Naive thymus-derived CD4-positive, alpha-beta T cell (primary cell): ENCODE measurements at regions of chr1 and their contacts with region 1.

Region 1: DNA sequence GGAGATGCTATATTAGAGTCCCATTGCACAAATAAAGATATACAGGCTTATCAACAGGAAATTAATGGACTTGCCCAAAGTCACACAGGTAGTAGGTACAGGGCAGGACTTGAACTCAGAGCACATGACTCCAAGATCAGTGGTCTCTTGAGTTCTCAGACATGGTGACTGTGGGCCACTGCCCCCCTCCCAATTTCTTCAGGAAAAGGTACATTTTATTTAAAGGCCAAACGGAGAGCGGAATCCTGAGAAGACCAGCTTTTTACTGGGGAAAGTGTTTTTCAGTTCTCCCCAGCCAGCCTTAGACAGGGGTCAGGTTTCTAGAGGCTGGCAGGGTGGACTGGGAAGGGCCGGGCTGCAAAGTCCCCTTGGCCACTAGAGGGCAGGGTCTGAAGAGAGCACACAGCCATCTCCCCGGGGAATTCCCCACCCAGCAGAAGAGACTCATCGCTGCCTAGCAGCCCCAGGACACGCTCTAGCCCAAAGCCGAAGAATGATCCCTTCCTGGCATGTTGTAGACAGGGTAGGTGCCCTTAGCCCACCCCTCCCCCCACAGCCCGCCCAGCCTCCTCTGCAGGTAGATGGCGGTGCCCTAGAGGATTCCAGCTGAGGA is 29.7 kb downstream of the ACP6 start:
- DNase-seq: peak; percentile 51 to 77 (median 67)
- ATAC-seq: peak; percentile 100
- H3K4me3 ChIP-seq: no peak overlapping the region
- H3K4me3 Mint-ChIP-seq: peak overlapping the region in 2 of 10 donors; percentile 43 to 48
- H3K27ac ChIP-seq: no peak overlapping the region
- H3K27ac Mint-ChIP-seq: peak overlapping the region in 3 of 9 donors; percentile 13 to 60 (median 27)
- H3K4me1 ChIP-seq: peaks cover 3 to 11% of the 10 kb centered on the region in 2 donors
- H3K4me1 Mint-ChIP-seq: peaks cover 13 to 40% (median 25%) of the 10 kb centered on the region in 7 donors
- H3K27me3 ChIP-seq: no peaks in the 10 kb centered on the region
- H3K27me3 Mint-ChIP-seq: no peaks in the 10 kb centered on the region

Region 2: DNA sequence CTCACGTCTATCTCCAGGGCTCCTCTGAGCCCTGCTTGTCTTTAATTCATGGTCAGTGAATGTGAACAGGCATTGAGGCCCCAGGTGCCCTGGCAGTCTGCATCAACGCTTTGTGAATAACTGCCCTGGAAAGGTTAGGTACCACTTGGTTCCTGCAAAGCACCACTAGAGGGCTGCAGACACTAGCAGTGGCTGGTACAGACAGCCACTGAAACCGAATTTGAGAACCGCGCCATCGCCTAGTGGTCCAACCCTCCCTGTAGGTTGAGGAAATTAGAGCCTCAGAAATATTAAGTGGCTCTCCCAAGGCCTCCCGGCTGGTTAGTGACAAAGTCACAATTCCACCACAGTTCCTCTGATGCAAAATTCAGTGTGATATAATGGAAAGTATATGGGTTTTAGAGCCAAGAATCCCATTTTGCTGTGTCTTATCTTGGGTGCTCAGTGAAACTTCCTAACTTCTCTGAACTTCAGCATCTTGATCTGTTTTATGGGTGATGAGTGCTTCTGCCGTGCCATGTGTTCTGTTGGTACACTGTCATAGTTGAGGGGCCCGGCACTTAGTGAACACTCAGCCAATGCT is 145.6 kb before region 1 on chr1:
- CTCF ChIA-PET with region 1: interaction called, 6 read pairs
- POLR2A ChIA-PET with region 1: no interaction called
- intact Hi-C with region 1: loop called (anchors 1 kb)
- DNase-seq: peak; percentile 27 to 73 (median 65)
- ATAC-seq: peak; percentile 94
- H3K4me3 ChIP-seq: no peak overlapping the region
- H3K4me3 Mint-ChIP-seq: peak overlapping the region in 1 of 10 donors; percentile 49
- H3K27ac ChIP-seq: no peak overlapping the region
- H3K27ac Mint-ChIP-seq: peak overlapping the region in 1 of 9 donors; percentile 33
- H3K4me1 ChIP-seq: no peaks in the 10 kb centered on the region
- H3K4me1 Mint-ChIP-seq: peaks cover 0 to 7% (median 0%) of the 10 kb centered on the region in 7 donors
- H3K27me3 ChIP-seq: peaks cover 0 to 4% of the 10 kb centered on the region in 2 donors
- H3K27me3 Mint-ChIP-seq: peaks cover 0 to 18% (median 0%) of the 10 kb centered on the region in 5 donors

Region 3: DNA sequence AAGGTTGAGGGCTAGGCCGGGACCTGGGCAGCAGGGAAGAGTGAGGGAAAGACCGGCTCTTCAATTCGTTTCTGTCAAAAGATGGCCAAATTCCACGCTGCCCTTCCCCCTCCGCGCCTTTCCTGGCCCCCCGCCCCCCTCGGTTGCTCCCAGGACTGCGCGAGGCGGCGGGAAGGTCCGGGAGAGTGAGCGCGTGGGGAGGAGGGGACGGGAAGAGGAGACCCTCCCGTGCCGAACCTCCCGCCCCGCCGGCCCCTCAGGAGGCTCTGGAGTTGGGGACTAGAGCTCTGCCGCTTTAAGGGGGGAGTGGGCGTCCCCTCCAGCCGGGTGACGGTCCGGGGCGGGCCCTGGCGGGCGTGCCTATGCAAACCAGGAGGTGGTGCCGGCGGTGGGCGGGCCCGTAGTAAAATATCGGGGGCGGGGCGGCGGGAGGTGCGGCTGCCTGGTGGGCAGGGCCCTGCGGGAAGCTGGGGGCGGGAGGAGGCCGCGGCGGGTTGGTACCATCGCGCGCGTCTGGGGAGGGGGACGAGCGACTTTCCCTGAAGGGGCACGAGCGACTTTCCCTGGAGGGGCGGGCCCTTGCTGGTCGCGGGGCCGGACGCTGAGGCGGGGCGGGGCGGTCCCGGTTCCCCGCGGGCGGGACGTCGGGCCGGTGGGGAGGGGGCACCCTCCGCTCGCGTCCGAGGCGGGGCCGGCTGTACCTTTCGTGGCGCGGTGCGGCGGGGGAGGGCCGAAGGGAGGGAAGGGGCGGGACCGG is 41.1 kb before region 1 on chr1:
- CTCF ChIA-PET with region 1: no interaction called
- POLR2A ChIA-PET with region 1: no interaction called
- intact Hi-C with region 1: loop called (anchors 2 to 5 kb)
- DNase-seq: peak; percentile 90 to 97 (median 96)
- ATAC-seq: peak; percentile 90
- H3K4me3 ChIP-seq: peak overlapping the region; percentile 72
- H3K4me3 Mint-ChIP-seq: peak overlapping the region; percentile 82 to 96 (median 90)
- H3K27ac ChIP-seq: peak overlapping the region; percentile 73
- H3K27ac Mint-ChIP-seq: peak overlapping the region; percentile 55 to 94 (median 87)
- H3K4me1 ChIP-seq: peaks cover 8 to 15% of the 10 kb centered on the region in 2 donors
- H3K4me1 Mint-ChIP-seq: peaks cover 15 to 38% (median 35%) of the 10 kb centered on the region in 7 donors
- H3K27me3 ChIP-seq: no peaks in the 10 kb centered on the region
- H3K27me3 Mint-ChIP-seq: peaks cover 0 to 18% (median 0%) of the 10 kb centered on the region in 5 donors

Region 4: GRCh38 chr1:147670317-147671041 is 29.8 kb after region 1 on chr1 and contains the start of gene ACP6:
- CTCF ChIA-PET with region 1: interaction called, 4 read pairs
- POLR2A ChIA-PET with region 1: no interaction called
- intact Hi-C with region 1: loop called (anchors 1 to 2 kb)
- DNase-seq: peak; percentile 61 to 86 (median 82)
- ATAC-seq: peak; percentile 98
- H3K4me3 ChIP-seq: peak within 1 kb of the TSS; percentile 78
- H3K4me3 Mint-ChIP-seq: peak within 1 kb of the TSS; percentile 93 to 98 (median 97)
- H3K27ac ChIP-seq: peak within 1 kb of the TSS; percentile 69
- H3K27ac Mint-ChIP-seq: peak within 1 kb of the TSS; percentile 83 to 94 (median 89)
- H3K4me1 ChIP-seq: peaks cover 0 to 7% of the 10 kb centered on the region in 2 donors
- H3K4me1 Mint-ChIP-seq: peaks cover 15 to 38% (median 29%) of the 10 kb centered on the region in 7 donors
- H3K27me3 ChIP-seq: no peaks in the 10 kb centered on the region
- H3K27me3 Mint-ChIP-seq: peaks cover 0 to 27% (median 12%) of the 10 kb centered on the region in 5 donors
- total RNA-seq, gene ACP6: 10.3 to 22.4 (median 16.6) TPM

Region 5: DNA sequence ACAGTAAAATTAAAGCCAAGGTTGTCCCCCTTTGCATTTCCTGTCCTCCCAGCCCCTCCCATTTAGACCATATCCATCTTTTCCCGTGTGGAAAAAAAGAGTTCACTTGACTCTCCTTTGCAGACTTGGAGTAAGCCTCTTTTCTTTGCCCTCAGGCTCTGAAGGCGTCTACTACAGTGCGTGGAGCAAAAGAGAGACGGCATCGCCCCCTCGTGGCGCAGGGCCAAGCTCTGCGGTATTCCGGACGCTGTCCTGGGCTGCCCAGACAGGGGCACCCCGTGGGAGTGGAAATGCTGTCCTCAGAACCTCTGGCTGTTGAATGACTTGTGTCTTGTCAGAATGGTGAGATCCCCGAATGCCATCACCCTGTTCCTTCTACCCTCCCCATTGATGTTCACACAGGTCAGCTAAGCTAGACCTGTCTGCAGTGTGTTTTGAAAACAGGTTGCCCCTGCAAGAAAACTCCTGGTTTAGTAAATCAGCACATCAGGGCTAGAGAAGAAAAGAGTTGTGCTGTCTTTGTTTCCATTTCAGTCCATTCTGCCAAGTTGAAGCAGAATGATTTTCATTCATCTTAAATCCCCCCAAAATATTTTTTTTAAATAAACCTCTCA is 249.6 kb after region 1 on chr1:
- CTCF ChIA-PET with region 1: interaction called, 10 read pairs
- POLR2A ChIA-PET with region 1: no interaction called
- intact Hi-C with region 1: loop called (anchors 1 kb)
- DNase-seq: peak in 8 of 9 donors; percentile 7 to 68 (median 44)
- ATAC-seq: peak; percentile 78
- H3K4me3 ChIP-seq: no peak overlapping the region
- H3K4me3 Mint-ChIP-seq: no peak overlapping the region
- H3K27ac ChIP-seq: no peak overlapping the region
- H3K27ac Mint-ChIP-seq: no peak overlapping the region
- H3K4me1 ChIP-seq: no peaks in the 10 kb centered on the region
- H3K4me1 Mint-ChIP-seq: peaks cover 0 to 4% (median 0%) of the 10 kb centered on the region in 7 donors
- H3K27me3 ChIP-seq: no peaks in the 10 kb centered on the region
- H3K27me3 Mint-ChIP-seq: peaks cover 0 to 18% (median 0%) of the 10 kb centered on the region in 5 donors